AG04449 (cell line): ENCODE measurements at regions of chr10 and their contacts with region 1.

Region 1: DNA sequence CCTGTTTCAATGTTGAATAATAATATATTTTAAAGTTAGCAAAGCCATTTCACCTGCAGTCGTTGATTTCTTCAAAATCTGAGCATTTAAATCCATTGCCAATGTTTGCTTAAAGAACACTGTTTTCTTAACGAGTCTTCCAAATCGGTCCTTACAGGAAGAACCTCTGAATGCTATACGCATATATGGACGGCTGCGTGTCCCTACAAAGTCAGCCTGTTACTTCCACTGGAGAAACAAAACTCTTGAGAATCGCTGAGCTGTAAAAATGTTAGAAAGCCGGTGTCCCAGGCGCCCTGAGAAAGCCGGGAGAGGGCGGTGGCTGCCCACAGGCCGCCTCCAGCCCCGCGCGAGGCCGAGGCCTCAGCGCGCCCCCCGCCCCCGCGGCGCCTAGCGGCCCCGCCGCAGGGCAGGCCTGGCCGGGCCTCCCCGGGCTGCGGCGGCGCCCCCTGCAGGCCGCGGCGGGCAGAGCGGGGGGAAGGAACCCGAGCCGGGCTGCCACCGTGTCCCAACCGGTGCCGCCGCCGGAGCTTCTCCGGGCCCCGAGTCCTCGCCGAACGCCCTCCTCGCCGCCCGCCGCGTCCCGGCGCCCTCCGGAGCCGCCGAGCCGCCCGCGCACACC is at the start of gene FHIP2A:
- DNase-seq: no peak
- H3K4me3 ChIP-seq: peak within 1 kb of the TSS; percentile 76
- CTCF ChIP-seq: peak; percentile 57

Region 2: GRCh38 chr10:114779803-114780609 is 41.4 kb before region 1 on chr10:
- CTCF ChIA-PET with region 1: interaction called, 12 read pairs
- POLR2A ChIA-PET with region 1: no interaction called
- DNase-seq: peak; percentile 67
- H3K4me3 ChIP-seq: no peak overlapping the region
- CTCF ChIP-seq: no peak

Region 3: DNA sequence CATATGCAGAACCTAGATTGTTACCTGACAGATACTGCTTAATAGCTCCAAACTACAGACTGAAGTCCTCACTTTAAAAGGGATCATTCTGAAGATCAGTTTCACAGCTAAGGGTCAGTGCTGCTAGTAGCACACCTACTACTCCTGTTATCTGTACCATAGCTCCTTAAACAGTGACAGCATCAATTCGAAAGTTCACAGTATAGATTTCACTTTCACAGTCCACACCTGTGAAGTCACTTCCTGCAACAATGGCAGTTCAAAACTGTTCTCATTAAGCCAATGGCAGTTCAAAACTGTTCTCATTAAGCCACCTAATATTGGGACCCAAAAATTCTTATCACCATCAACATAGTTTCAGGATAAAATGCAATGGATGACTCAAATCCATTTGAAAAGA is 10.5 kb before region 1 on chr10:
- CTCF ChIA-PET with region 1: interaction called, 39 read pairs
- POLR2A ChIA-PET with region 1: no interaction called
- DNase-seq: no peak
- H3K4me3 ChIP-seq: no peak overlapping the region
- CTCF ChIP-seq: no peak

Region 4: GRCh38 chr10:114855776-114856543 is 34.6 kb after region 1 on chr10:
- CTCF ChIA-PET with region 1: interaction called, 17 read pairs
- POLR2A ChIA-PET with region 1: interaction called, 4 read pairs
- DNase-seq: no peak
- H3K4me3 ChIP-seq: no peak overlapping the region
- CTCF ChIP-seq: no peak

Region 5: GRCh38 chr10:114869520-114869892 is 48.1 kb after region 1 on chr10:
- CTCF ChIA-PET with region 1: interaction called, 13 read pairs
- POLR2A ChIA-PET with region 1: interaction called, 12 read pairs
- DNase-seq: peak; percentile 51
- H3K4me3 ChIP-seq: no peak overlapping the region
- CTCF ChIP-seq: no peak